ENCODE measurements at regions of chr22 and their contacts with region 1.

Region 1: GRCh38 chr22:23178512-23179254 is 1.6 kb upstream of the BCR start:
- DNase-seq: peak; percentile 64
- H3K4me3 Mint-ChIP-seq: peak overlapping the region; percentile 13
- H3K27ac Mint-ChIP-seq: peak overlapping the region; percentile 78
- H3K4me1 Mint-ChIP-seq: peaks cover 40% of the 10 kb centered on the region
- H3K27me3 Mint-ChIP-seq: no peaks in the 10 kb centered on the region
- CTCF ChIP-seq: peak; percentile 98

Region 2: DNA sequence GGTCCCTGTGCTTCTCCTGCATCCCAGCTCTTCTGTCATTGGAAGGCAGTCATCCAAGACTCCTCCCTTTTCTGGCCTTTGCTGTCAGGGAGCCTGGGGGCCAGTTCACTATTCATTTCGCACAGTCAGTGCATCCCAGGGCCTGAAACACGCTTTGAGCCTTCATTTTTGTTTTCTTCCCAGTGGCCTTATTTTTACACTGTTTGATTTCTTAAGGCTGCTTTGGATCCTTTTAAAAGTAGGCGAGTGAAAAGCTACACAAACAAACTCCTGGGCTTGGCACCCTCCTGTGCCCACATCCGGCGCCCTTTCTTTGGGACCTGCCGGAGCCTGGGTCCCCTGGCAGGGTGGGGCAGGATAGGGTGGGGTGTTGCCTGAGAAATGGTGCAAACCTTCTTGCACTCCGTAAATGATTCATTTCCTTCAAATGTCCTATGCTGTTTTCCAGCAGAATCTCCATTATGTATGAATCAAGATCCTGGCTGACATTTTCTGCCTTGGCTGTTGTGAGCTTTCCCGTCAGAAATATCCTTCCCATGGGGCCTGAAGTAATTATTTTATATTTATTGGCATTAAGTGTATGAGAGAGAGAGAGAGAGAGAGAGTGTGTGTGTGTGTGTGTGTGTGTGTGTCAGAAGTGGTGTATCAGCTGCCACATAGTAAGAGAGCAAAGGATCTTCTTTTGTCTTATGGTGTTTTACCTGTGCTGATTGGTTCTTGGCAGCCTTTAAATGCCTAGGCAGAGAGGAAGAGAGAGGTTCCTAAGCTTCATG is 47.2 kb after region 1 on chr22:
- CTCF ChIA-PET with region 1: interaction called, 8 read pairs
- POLR2A ChIA-PET with region 1: interaction called, 53 read pairs
- intact Hi-C with region 1: loop called (anchors 5 kb)
- DNase-seq: peak; percentile 92
- H3K4me3 Mint-ChIP-seq: peak overlapping the region; percentile 62
- H3K27ac Mint-ChIP-seq: peak overlapping the region; percentile 95
- H3K4me1 Mint-ChIP-seq: peaks cover 52% of the 10 kb centered on the region
- H3K27me3 Mint-ChIP-seq: no peaks in the 10 kb centered on the region
- CTCF ChIP-seq: no peak

Region 3: GRCh38 chr22:23256986-23257888 is 78.6 kb after region 1 on chr22:
- CTCF ChIA-PET with region 1: interaction called, 3 read pairs
- POLR2A ChIA-PET with region 1: interaction called, 4 read pairs
- intact Hi-C with region 1: loop called (anchors 1 kb)
- DNase-seq: peak; percentile 51
- H3K4me3 Mint-ChIP-seq: no peak overlapping the region
- H3K27ac Mint-ChIP-seq: peak overlapping the region; percentile 88
- H3K4me1 Mint-ChIP-seq: peaks cover 12% of the 10 kb centered on the region
- H3K27me3 Mint-ChIP-seq: no peaks in the 10 kb centered on the region
- CTCF ChIP-seq: no peak

Region 4: DNA sequence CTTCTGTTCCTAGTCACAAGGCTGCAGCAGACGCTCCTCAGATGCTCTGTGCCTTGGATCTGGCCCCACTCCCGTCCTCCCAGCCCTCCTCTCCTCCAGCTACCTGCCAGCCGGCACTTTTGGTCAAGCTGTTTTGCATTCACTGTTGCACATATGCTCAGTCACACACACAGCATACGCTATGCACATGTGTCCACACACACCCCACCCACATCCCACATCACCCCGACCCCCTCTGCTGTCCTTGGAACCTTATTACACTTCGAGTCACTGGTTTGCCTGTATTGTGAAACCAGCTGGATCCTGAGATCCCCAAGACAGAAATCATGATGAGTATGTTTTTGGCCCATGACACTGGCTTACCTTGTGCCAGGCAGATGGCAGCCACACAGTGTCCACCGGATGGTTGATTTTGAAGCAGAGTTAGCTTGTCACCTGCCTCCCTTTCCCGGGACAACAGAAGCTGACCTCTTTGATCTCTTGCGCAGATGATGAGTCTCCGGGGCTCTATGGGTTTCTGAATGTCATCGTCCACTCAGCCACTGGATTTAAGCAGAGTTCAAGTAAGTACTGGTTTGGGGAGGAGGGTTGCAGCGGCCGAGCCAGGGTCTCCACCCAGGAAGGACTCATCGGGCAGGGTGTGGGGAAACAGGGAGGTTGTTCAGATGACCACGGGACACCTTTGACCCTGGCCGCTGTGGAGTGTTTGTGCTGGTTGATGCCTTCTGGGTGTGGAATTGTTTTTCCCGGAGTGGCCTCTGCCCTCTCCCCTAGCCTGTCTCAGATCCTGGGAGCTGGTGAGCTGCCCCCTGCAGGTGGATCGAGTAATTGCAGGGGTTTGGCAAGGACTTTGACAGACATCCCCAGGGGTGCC is 111.4 kb after region 1 on chr22:
- CTCF ChIA-PET with region 1: interaction called, 43 read pairs
- POLR2A ChIA-PET with region 1: interaction called, 4 read pairs
- intact Hi-C with region 1: loop called (anchors 1 kb)
- DNase-seq: peak; percentile 61
- H3K4me3 Mint-ChIP-seq: no peak overlapping the region
- H3K27ac Mint-ChIP-seq: no peak overlapping the region
- H3K4me1 Mint-ChIP-seq: peaks cover 6% of the 10 kb centered on the region
- H3K27me3 Mint-ChIP-seq: no peaks in the 10 kb centered on the region
- CTCF ChIP-seq: peak; percentile 76

Measured in MCF 10A (cell line).